ENCODE measurements at regions of chr18 and their contacts with region 1.

Region 1: GRCh38 chr18:34661464-34662111 is 48.5 kb upstream of the DTNA start:
- DNase-seq: no peak
- ATAC-seq: peak; percentile 49
- H3K4me3 Mint-ChIP-seq: no peak overlapping the region
- H3K27ac Mint-ChIP-seq: no peak overlapping the region
- H3K4me1 Mint-ChIP-seq: no peaks in the 10 kb centered on the region
- H3K27me3 Mint-ChIP-seq: peaks cover 18% of the 10 kb centered on the region
- CTCF ChIP-seq: peak; percentile 73

Region 2: GRCh38 chr18:34650121-34650545 is 11.5 kb before region 1 on chr18:
- CTCF ChIA-PET with region 1: interaction called, 30 read pairs
- POLR2A ChIA-PET with region 1: no interaction called
- intact Hi-C with region 1: no loop called
- DNase-seq: no peak
- ATAC-seq: no peak
- H3K4me3 Mint-ChIP-seq: no peak overlapping the region
- H3K27ac Mint-ChIP-seq: no peak overlapping the region
- H3K4me1 Mint-ChIP-seq: no peaks in the 10 kb centered on the region
- H3K27me3 Mint-ChIP-seq: peaks cover 6% of the 10 kb centered on the region
- CTCF ChIP-seq: no peak

Region 3: DNA sequence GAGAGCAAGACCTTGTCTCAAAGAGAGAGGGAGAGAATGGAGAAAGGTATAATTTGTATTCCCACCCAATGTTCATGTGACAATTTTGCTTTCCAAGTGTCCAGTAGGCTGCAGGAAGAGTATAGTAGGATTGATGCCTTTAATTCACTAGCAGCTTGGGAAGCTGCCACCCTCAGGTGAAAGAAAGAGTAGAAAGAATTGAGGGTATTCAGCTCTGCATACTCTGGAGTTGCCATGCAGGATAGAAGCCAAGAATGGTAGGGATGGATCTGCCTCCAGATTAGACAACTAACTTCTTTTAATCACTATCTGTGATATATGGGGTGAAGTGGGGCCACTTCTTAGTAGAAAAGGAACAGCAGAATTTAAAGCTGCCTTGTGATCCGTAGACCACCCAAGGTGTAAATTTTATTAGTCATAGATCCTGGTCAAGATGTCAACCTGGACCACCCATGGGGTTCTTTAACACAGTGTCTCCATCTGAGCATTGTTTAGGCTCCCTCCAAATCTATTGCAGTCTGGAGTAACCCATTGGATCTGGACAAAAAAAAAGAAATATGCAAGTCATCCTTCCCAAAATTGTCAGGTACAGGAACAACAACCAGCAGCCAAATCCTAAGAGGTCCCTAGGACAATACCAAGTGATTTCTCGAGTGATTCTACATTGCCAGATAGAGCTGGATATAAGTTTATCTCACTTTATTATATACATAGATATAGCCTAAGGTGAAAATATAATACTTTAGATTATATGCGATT is 15.4 kb after region 1 on chr18:
- CTCF ChIA-PET with region 1: interaction called, 27 read pairs
- POLR2A ChIA-PET with region 1: no interaction called
- intact Hi-C with region 1: no loop called
- DNase-seq: no peak
- ATAC-seq: no peak
- H3K4me3 Mint-ChIP-seq: no peak overlapping the region
- H3K27ac Mint-ChIP-seq: no peak overlapping the region
- H3K4me1 Mint-ChIP-seq: no peaks in the 10 kb centered on the region
- H3K27me3 Mint-ChIP-seq: no peaks in the 10 kb centered on the region
- CTCF ChIP-seq: no peak

Region 4: GRCh38 chr18:34729264-34729663 is 67.7 kb after region 1 on chr18:
- CTCF ChIA-PET with region 1: interaction called, 15 read pairs
- POLR2A ChIA-PET with region 1: no interaction called
- intact Hi-C with region 1: no loop called
- DNase-seq: peak; percentile 9
- ATAC-seq: peak; percentile 20
- H3K4me3 Mint-ChIP-seq: no peak overlapping the region
- H3K27ac Mint-ChIP-seq: no peak overlapping the region
- H3K4me1 Mint-ChIP-seq: peaks cover 2% of the 10 kb centered on the region
- H3K27me3 Mint-ChIP-seq: peaks cover 7% of the 10 kb centered on the region
- CTCF ChIP-seq: peak; percentile 35

Region 5: DNA sequence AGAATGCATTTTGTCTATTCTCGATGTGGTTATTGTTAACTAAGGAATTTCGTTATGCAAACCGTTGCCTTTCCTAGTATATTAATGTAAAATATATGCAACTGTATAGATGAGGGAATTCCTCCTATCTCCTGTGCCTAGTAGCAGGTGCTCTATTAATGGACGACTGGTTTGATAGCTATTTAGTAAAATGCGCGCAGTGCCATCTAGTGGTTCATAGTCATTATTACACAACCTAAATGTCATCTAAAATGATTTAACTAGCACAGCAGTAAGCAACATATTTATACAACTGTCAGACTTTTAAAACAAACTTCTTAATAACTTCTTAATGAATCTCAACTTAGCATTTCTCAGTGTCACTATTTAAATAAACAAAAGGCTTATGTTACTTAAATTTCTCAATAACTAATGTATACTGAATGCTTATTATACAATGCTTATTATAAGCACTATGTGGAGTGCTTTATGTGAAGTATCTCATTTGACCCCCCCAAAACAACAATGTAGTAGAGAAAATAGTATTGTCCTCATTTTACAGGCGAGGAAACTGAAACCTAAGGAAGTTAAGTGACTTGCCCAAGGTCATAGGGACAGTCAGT is 126.4 kb after region 1 on chr18:
- CTCF ChIA-PET with region 1: interaction called, 30 read pairs
- POLR2A ChIA-PET with region 1: no interaction called
- intact Hi-C with region 1: loop called (anchors 2 kb)
- DNase-seq: peak; percentile 58
- ATAC-seq: peak; percentile 78
- H3K4me3 Mint-ChIP-seq: no peak overlapping the region
- H3K27ac Mint-ChIP-seq: no peak overlapping the region
- H3K4me1 Mint-ChIP-seq: peaks cover 8% of the 10 kb centered on the region
- H3K27me3 Mint-ChIP-seq: peaks cover 13% of the 10 kb centered on the region
- CTCF ChIP-seq: peak; percentile 82